B cell (primary cell): ENCODE measurements at regions of chr16 and their contacts with region 1.

Region 1: GRCh38 chr16:79601931-79602627 is 1.5 kb upstream of the MAF start:
- DNase-seq: peak; percentile 73
- ATAC-seq: no peak
- H3K4me3 ChIP-seq: peak overlapping the region; percentile 47 to 84 (median 64)
- H3K4me3 Mint-ChIP-seq: peak overlapping the region; percentile 95
- H3K27ac ChIP-seq: no peak overlapping the region
- H3K27ac Mint-ChIP-seq: no peak overlapping the region
- H3K4me1 ChIP-seq: peaks cover 34 to 38% of the 10 kb centered on the region in 2 donors
- H3K4me1 Mint-ChIP-seq: peaks cover 29% of the 10 kb centered on the region
- H3K27me3 ChIP-seq: peaks cover 0 to 53% (median 37%) of the 10 kb centered on the region in 4 experiments
- H3K27me3 Mint-ChIP-seq: peaks cover 57% of the 10 kb centered on the region
- CTCF ChIP-seq: peak; percentile 86

Region 2: GRCh38 chr16:78122774-78123315 is 1479.2 kb before region 1 on chr16:
- CTCF ChIA-PET with region 1: no interaction called
- POLR2A ChIA-PET with region 1: no interaction called
- intact Hi-C with region 1: loop called (anchors 2 kb)
- DNase-seq: peak; percentile 65
- ATAC-seq: peak; percentile 58
- H3K4me3 ChIP-seq: no peak overlapping the region
- H3K4me3 Mint-ChIP-seq: no peak overlapping the region
- H3K27ac ChIP-seq: no peak overlapping the region
- H3K27ac Mint-ChIP-seq: no peak overlapping the region
- H3K4me1 ChIP-seq: no peaks in the 10 kb centered on the region
- H3K4me1 Mint-ChIP-seq: peaks cover 2% of the 10 kb centered on the region
- H3K27me3 ChIP-seq: no peaks in the 10 kb centered on the region
- H3K27me3 Mint-ChIP-seq: no peaks in the 10 kb centered on the region
- CTCF ChIP-seq: peak; percentile 78

Region 3: DNA sequence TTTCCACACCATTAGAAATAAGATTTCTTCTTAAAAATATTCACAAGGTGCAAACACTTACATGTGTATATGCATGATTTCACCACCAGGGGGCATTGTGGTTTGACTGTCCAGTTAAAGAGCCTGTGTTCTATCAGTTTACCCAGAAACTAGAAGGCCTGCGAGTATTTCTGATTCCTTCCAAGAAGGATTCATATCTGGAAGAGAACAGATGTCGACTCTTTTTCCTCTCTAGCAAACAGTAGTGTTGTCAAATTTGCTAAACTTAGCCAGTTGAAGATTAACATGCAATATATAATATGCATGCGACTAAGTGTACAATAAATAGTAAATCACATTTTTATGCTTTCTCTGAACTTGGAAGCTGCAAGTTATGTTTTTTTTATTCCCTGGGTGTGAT is 1098.5 kb before region 1 on chr16:
- CTCF ChIA-PET with region 1: interaction called, 6 read pairs
- POLR2A ChIA-PET with region 1: no interaction called
- intact Hi-C with region 1: loop called (anchors 2 kb)
- DNase-seq: peak; percentile 62
- ATAC-seq: no peak
- H3K4me3 ChIP-seq: no peak overlapping the region
- H3K4me3 Mint-ChIP-seq: no peak overlapping the region
- H3K27ac ChIP-seq: no peak overlapping the region
- H3K27ac Mint-ChIP-seq: no peak overlapping the region
- H3K4me1 ChIP-seq: no peaks in the 10 kb centered on the region
- H3K4me1 Mint-ChIP-seq: no peaks in the 10 kb centered on the region
- H3K27me3 ChIP-seq: no peaks in the 10 kb centered on the region
- H3K27me3 Mint-ChIP-seq: no peaks in the 10 kb centered on the region
- CTCF ChIP-seq: peak; percentile 80

Region 4: GRCh38 chr16:78705694-78706093 is 896.4 kb before region 1 on chr16:
- CTCF ChIA-PET with region 1: interaction called, 12 read pairs
- POLR2A ChIA-PET with region 1: no interaction called
- intact Hi-C with region 1: no loop called
- DNase-seq: peak; percentile 39
- ATAC-seq: no peak
- H3K4me3 ChIP-seq: no peak overlapping the region
- H3K4me3 Mint-ChIP-seq: no peak overlapping the region
- H3K27ac ChIP-seq: no peak overlapping the region
- H3K27ac Mint-ChIP-seq: no peak overlapping the region
- H3K4me1 ChIP-seq: no peaks in the 10 kb centered on the region
- H3K4me1 Mint-ChIP-seq: peaks cover 2% of the 10 kb centered on the region
- H3K27me3 ChIP-seq: no peaks in the 10 kb centered on the region
- H3K27me3 Mint-ChIP-seq: no peaks in the 10 kb centered on the region
- CTCF ChIP-seq: peak; percentile 59

Region 5: GRCh38 chr16:78770353-78771091 is 831.6 kb before region 1 on chr16:
- CTCF ChIA-PET with region 1: no interaction called
- POLR2A ChIA-PET with region 1: no interaction called
- intact Hi-C with region 1: loop called (anchors 10 kb)
- DNase-seq: peak; percentile 84
- ATAC-seq: peak; percentile 85
- H3K4me3 ChIP-seq: no peak overlapping the region
- H3K4me3 Mint-ChIP-seq: peak overlapping the region; percentile 1
- H3K27ac ChIP-seq: peak overlapping the region in 1 of 2 donors; percentile 35
- H3K27ac Mint-ChIP-seq: peak overlapping the region; percentile 8
- H3K4me1 ChIP-seq: peaks cover 10 to 19% of the 10 kb centered on the region in 2 donors
- H3K4me1 Mint-ChIP-seq: peaks cover 16% of the 10 kb centered on the region
- H3K27me3 ChIP-seq: no peaks in the 10 kb centered on the region
- H3K27me3 Mint-ChIP-seq: no peaks in the 10 kb centered on the region
- CTCF ChIP-seq: peak; percentile 95